ENCODE measurements at regions of chr3 and their contacts with region 1.

Region 1: GRCh38 chr3:188954590-188955208 is 217.1 kb upstream of the TPRG1 start:
- DNase-seq: peak; percentile 83
- ATAC-seq: peak; percentile 91
- H3K4me3 ChIP-seq: no peak overlapping the region
- H3K27ac ChIP-seq: peak overlapping the region; percentile 66
- H3K4me1 ChIP-seq: peaks cover 21% of the 10 kb centered on the region
- H3K27me3 ChIP-seq: no peaks in the 10 kb centered on the region
- CTCF ChIP-seq: peak; percentile 96

Region 2: GRCh38 chr3:187739561-187740332 is 1215.0 kb before region 1 on chr3:
- intact Hi-C with region 1: loop called (anchors 5 kb)
- DNase-seq: peak; percentile 91
- ATAC-seq: peak; percentile 59
- H3K4me3 ChIP-seq: peak overlapping the region; percentile 74
- H3K27ac ChIP-seq: peak overlapping the region; percentile 100
- H3K4me1 ChIP-seq: peaks cover 23% of the 10 kb centered on the region
- H3K27me3 ChIP-seq: no peaks in the 10 kb centered on the region
- CTCF ChIP-seq: peak; percentile 98

Region 3: DNA sequence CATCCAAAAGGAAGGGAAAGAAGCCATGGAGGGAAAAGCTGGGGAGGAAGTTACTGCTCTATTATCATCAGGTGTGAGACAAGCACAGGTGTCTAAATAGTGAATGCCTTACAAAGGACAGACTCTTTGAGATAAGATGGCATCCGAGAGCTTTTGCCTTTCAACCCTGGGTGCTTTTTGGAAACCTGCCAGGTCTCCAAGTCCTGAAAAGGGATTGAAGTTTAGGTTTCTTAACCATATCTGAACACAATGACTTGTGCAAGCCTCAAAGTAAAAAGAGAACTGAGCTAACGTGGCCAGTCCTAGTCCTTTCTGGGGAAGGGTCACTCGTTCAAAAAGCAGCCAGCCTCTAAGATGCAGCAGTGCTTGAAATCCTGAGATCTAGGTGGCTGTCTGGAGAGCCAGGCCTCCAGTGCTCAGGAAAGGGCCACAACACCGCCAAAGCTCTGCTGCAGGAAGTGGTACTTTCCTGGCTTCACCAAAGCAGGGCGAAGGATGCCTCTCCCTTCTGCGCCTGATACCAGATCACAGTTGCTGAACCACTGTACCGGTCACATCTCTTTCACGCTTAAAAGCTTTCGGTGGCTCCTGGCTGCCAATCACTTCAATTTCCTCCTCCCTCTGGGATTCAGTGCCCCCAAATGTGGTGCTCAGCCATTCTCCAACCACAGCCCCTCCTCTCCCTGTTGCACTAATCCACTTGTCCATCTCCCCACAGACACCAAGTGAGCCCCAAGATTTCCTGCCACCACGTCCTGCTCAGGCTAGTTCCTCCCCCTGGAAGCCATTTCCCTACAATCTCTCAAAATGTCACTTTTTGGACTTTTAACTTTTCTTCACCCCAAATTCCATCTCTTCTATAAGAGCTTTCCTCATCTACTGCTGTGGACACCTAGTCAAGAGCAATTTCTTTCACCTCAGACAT is 904.8 kb before region 1 on chr3:
- intact Hi-C with region 1: loop called (anchors 10 kb)
- DNase-seq: no peak
- ATAC-seq: peak; percentile 29
- H3K4me3 ChIP-seq: no peak overlapping the region
- H3K27ac ChIP-seq: no peak overlapping the region
- H3K4me1 ChIP-seq: peaks cover 8% of the 10 kb centered on the region
- H3K27me3 ChIP-seq: no peaks in the 10 kb centered on the region
- CTCF ChIP-seq: no peak

Region 4: GRCh38 chr3:189027626-189028155 is 73.0 kb after region 1 on chr3:
- intact Hi-C with region 1: no loop called
- DNase-seq: no peak
- ATAC-seq: no peak
- H3K4me3 ChIP-seq: no peak overlapping the region
- H3K27ac ChIP-seq: no peak overlapping the region
- H3K4me1 ChIP-seq: no peaks in the 10 kb centered on the region
- H3K27me3 ChIP-seq: no peaks in the 10 kb centered on the region
- CTCF ChIP-seq: no peak

Region 5: GRCh38 chr3:189148081-189148507 is 193.4 kb after region 1 on chr3:
- intact Hi-C with region 1: loop called (anchors 10 kb)
- DNase-seq: no peak
- ATAC-seq: peak; percentile 89
- H3K4me3 ChIP-seq: no peak overlapping the region
- H3K27ac ChIP-seq: no peak overlapping the region
- H3K4me1 ChIP-seq: peaks cover 15% of the 10 kb centered on the region
- H3K27me3 ChIP-seq: no peaks in the 10 kb centered on the region
- CTCF ChIP-seq: peak; percentile 79

Region 6: DNA sequence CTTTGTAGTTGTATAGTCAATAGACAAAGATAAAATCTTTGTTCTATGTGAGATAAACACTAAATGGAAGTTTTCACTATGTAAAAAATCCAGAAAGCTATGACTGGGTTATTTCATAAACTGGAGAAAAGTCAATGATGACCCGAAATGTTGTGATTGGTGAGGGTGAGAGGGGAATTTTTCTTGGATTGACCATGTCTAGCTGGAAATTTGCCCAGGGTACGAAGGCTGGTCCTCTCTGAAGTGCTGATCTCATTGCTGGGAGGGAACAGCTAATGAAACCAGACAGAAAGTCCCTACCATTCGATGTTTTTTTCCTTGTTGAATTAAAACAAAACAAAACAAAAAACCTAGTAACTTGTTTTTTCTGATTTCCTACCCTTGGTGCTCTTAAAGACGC is 231.4 kb after region 1 on chr3:
- intact Hi-C with region 1: no loop called
- DNase-seq: no peak
- ATAC-seq: peak; percentile 31
- H3K4me3 ChIP-seq: no peak overlapping the region
- H3K27ac ChIP-seq: peak overlapping the region; percentile 19
- H3K4me1 ChIP-seq: peaks cover 9% of the 10 kb centered on the region
- H3K27me3 ChIP-seq: no peaks in the 10 kb centered on the region
- CTCF ChIP-seq: no peak

Region 7: DNA sequence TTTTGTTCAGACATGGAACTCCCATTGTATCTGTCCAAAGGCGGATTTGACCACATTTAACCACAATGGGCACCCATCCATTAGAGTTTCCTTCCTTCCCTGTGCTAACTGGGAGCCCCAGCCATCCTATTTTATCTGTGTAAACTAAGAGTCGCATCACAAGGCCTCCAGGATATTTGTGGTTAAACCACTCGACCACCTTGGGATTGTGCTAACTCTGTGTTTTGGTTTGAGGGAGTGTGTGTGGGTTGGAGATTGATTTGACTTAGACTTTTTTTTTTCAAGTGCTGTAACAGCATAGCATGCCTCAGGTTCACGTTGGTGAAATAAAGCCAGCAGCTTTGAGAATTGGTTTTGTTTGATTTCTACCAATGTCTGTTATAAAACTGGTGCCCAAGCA is 576.1 kb after region 1 on chr3:
- intact Hi-C with region 1: no loop called
- DNase-seq: no peak
- ATAC-seq: no peak
- H3K4me3 ChIP-seq: no peak overlapping the region
- H3K27ac ChIP-seq: no peak overlapping the region
- H3K4me1 ChIP-seq: no peaks in the 10 kb centered on the region
- H3K27me3 ChIP-seq: no peaks in the 10 kb centered on the region
- CTCF ChIP-seq: no peak